Activated naive CD4-positive, alpha-beta T cell treated with anti-CD3 and anti-CD28 coated beads for 36 hours (primary cell): ENCODE measurements at regions of chr2 and their contacts with region 1.

Region 1: DNA sequence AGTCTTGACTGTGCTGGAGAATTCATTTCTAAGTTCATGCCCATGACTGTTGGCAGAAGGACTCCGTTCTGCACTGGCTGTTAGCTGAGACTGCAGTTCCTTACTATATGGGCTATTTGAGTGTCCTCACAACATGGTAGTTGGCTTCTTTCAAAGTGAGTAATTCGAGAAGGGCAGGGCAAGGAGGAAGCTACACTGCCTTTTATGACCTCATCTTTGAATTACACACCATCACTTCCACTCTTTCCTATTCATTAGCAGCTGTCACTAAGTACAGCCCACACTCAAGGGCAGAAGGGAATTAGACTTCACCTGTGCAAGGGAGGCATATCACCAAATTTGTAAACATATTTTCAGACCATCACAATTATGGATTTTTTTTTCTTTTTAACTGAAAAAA is 55.9 kb upstream of the EPAS1 start:
- DNase-seq: no peak
- H3K4me3 Mint-ChIP-seq: no peak overlapping the region
- H3K27ac Mint-ChIP-seq: no peak overlapping the region
- H3K4me1 Mint-ChIP-seq: peaks cover 33% of the 10 kb centered on the region
- H3K27me3 Mint-ChIP-seq: no peaks in the 10 kb centered on the region

Region 2: DNA sequence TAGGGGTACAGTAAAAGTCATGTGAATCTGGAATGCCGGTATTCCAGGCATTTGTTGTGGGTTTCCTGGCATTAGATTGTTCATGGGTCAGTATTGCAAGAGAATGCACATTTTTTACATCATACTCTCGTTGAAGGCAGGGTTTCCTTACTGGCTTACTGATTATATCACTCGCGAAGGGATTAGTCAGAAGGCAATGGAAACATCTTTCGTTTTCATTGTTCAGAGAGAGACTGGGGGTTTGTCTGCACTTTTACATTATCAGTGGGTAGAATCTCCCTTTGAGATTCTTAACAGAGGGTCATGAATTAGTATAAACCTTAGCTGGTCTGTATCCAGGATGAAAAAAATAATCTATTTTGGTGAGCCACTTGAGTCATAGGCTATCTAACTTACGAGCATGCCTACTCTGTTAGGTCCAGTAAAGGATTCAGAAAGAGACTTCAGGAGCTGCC is 173.5 kb before region 1 on chr2:
- CTCF ChIA-PET with region 1: interaction called, 4 read pairs
- intact Hi-C with region 1: loop called (anchors 5 kb)
- DNase-seq: no peak
- H3K4me3 Mint-ChIP-seq: no peak overlapping the region
- H3K27ac Mint-ChIP-seq: no peak overlapping the region
- H3K4me1 Mint-ChIP-seq: peaks cover 12% of the 10 kb centered on the region
- H3K27me3 Mint-ChIP-seq: no peaks in the 10 kb centered on the region

Region 3: GRCh38 chr2:46187112-46187618 is 54.2 kb before region 1 on chr2:
- CTCF ChIA-PET with region 1: no interaction called
- intact Hi-C with region 1: loop called (anchors 1 kb)
- DNase-seq: peak; percentile 70
- H3K4me3 Mint-ChIP-seq: peak overlapping the region; percentile 35
- H3K27ac Mint-ChIP-seq: peak overlapping the region; percentile 86
- H3K4me1 Mint-ChIP-seq: peaks cover 18% of the 10 kb centered on the region
- H3K27me3 Mint-ChIP-seq: peaks cover 2% of the 10 kb centered on the region

Region 4: DNA sequence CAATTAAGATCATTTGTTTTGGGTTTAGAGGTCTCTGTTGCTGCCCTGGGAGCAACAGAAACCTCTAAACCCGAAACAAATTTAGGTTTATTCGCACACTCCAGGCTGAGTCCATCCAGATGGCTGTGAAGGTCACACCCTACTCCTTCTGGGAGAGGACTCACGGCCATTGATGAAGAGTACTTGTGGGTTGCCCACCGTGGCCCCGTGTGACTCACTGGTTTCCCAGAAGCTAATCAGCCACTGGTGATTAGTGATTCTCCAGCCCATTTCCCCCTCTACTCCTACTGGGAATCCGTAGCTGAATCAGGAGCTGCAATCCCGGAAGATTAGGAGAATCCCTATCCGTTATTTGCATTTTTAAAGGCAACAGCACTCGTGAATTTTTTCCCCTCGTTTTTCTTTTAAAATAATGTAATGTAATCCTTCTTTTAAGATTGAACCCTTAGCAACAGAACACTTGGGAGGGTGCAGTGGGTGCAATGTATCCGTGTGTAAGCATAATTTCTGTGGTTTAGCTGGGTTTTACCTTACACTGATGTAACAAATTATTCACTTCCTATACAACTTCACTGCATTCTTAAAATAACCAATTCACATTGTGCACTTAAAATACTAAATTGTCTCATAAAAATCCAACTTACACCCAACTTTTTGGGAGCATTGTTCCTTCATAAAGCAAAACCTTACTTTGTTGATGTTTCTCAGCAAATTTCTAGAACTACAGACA is 28.4 kb after region 1 on chr2:
- CTCF ChIA-PET with region 1: no interaction called
- intact Hi-C with region 1: loop called (anchors 2 kb)
- DNase-seq: no peak
- H3K4me3 Mint-ChIP-seq: no peak overlapping the region
- H3K27ac Mint-ChIP-seq: peak overlapping the region; percentile 70
- H3K4me1 Mint-ChIP-seq: peaks cover 13% of the 10 kb centered on the region
- H3K27me3 Mint-ChIP-seq: no peaks in the 10 kb centered on the region

Region 5: DNA sequence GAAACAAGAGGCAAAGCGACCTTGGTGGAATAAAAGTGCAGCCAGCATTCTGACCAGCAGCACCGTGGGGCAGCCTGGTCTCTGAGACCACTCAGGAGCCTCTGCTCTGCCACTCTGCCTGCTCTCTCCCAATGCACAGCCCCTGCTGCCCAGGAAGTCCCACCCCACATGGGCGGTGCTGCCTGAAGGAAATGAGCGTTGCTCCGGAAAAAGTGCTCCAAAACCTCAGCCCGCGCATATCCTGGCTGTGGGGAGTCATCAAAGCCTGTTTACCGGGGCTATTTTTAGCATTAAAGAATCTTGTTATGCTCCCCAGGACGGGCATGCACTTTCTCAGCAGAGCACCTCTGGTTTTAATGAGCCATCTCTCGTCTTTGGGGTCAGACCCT is 110.4 kb after region 1 on chr2:
- CTCF ChIA-PET with region 1: no interaction called
- intact Hi-C with region 1: loop called (anchors 2 kb)
- DNase-seq: peak; percentile 93
- H3K4me3 Mint-ChIP-seq: peak overlapping the region; percentile 81
- H3K27ac Mint-ChIP-seq: peak overlapping the region; percentile 92
- H3K4me1 Mint-ChIP-seq: peaks cover 68% of the 10 kb centered on the region
- H3K27me3 Mint-ChIP-seq: no peaks in the 10 kb centered on the region